CD8-positive, alpha-beta T cell (primary cell): ENCODE measurements at regions of chr6 and their contacts with region 1.

Region 1: DNA sequence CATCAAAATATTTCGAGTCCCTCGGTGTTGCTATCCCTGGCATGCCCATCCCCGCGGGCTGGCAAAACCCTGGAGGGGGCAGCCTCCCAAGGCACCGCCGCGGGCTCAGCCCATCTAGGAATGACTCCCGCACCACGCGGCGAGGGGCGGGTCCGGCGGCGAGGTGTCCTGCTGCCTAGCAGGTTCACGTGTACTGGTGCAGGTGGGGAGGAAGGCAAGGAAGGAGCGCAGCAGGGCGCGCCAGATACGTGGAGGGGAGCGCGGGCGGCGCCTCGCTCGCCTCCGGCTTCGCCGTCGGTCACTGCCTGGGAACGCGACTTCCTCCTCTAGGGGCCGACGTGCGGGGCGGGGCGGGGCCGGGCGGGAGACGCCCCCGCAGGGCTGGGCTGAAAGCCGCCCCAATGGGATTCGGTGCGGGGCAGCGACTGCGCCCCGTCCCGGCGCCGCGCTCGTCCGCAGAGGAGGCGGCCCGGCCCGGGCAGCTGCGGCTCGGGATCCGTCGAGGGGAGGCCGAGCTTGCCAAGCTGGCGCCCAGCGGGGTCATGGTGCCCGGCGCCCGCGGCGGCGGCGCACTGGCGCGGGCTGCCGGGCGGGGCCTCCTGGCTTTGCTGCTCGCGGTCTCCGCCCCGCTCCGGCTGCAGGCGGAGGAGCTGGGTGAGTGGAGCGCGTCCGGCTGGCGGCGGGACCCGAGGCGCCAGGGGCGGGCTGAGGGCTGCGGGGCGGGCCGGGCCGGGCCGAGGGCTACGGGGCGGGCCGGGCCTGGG is at the start of gene DCBLD1:
- DNase-seq: peak in 8 of 9 experiments; percentile 21 to 75 (median 47)
- ATAC-seq: peak; percentile 66
- H3K4me3 ChIP-seq: peak within 1 kb of the TSS; percentile 72 to 74
- H3K4me3 Mint-ChIP-seq: peak within 1 kb of the TSS; percentile 90
- H3K27ac ChIP-seq: no peak within 1 kb of the TSS
- H3K27ac Mint-ChIP-seq: peak within 1 kb of the TSS; percentile 47
- H3K4me1 ChIP-seq: peaks cover 16% of the 10 kb centered on the region
- H3K4me1 Mint-ChIP-seq: peaks cover 17% of the 10 kb centered on the region
- H3K27me3 ChIP-seq: no peaks in the 10 kb centered on the region
- H3K27me3 Mint-ChIP-seq: peaks cover 31% of the 10 kb centered on the region
- CTCF ChIP-seq: no peak
- total RNA-seq, gene DCBLD1: 2.0 to 2.1 TPM

Region 2: GRCh38 chr6:117233145-117233544 is 249.3 kb before region 1 on chr6:
- CTCF ChIA-PET with region 1: no interaction called
- POLR2A ChIA-PET with region 1: no interaction called
- intact Hi-C with region 1: no loop called
- DNase-seq: no peak
- ATAC-seq: no peak
- H3K4me3 ChIP-seq: no peak overlapping the region
- H3K4me3 Mint-ChIP-seq: no peak overlapping the region
- H3K27ac ChIP-seq: no peak overlapping the region
- H3K27ac Mint-ChIP-seq: no peak overlapping the region
- H3K4me1 ChIP-seq: no peaks in the 10 kb centered on the region
- H3K4me1 Mint-ChIP-seq: no peaks in the 10 kb centered on the region
- H3K27me3 ChIP-seq: no peaks in the 10 kb centered on the region
- H3K27me3 Mint-ChIP-seq: no peaks in the 10 kb centered on the region
- CTCF ChIP-seq: no peak

Region 3: GRCh38 chr6:117463762-117464665 is 18.4 kb before region 1 on chr6:
- CTCF ChIA-PET with region 1: interaction called, 3 read pairs
- POLR2A ChIA-PET with region 1: no interaction called
- intact Hi-C with region 1: loop called in 1 of 2 experiments (anchors 2 kb)
- DNase-seq: no peak
- ATAC-seq: peak; percentile 48
- H3K4me3 ChIP-seq: no peak overlapping the region
- H3K4me3 Mint-ChIP-seq: no peak overlapping the region
- H3K27ac ChIP-seq: no peak overlapping the region
- H3K27ac Mint-ChIP-seq: no peak overlapping the region
- H3K4me1 ChIP-seq: no peaks in the 10 kb centered on the region
- H3K4me1 Mint-ChIP-seq: peaks cover 2% of the 10 kb centered on the region
- H3K27me3 ChIP-seq: no peaks in the 10 kb centered on the region
- H3K27me3 Mint-ChIP-seq: peaks cover 2% of the 10 kb centered on the region
- CTCF ChIP-seq: no peak

Region 4: DNA sequence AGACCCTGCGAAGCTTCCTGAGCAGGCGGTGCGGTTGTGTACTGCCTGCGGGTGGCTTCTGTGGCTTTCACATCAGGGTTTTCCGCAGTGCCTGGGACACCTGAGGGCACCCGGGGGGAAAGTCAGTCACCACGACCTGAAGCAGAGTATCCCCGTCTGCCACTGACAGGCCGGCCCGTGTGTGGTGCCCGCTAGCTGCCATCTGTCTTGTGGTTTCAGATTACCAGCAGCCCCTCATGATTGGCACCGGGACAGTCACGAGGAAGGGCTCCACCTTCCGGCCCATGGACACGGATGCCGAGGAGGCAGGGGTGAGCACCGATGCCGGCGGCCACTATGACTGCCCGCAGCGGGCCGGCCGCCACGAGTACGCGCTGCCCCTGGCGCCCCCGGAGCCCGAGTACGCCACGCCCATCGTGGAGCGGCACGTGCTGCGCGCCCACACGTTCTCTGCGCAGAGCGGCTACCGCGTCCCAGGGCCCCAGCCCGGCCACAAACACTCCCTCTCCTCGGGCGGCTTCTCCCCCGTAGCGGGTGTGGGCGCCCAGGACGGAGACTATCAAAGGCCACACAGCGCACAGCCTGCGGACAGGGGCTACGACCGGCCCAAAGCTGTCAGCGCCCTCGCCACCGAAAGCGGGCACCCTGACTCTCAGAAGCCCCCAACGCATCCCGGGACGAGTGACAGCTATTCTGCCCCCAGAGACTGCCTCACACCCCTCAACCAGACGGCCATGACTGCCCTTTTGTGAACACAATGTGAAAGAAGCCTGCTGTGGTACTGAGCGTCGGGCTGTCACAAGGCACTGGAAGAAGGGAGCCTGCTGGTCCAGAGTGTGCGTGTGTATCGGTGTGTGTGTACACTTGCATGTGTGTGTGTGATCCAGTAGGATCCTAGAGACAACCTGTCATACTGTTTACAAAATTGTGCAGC is 65.5 kb after region 1 on chr6:
- CTCF ChIA-PET with region 1: interaction called, 10 read pairs
- POLR2A ChIA-PET with region 1: interaction called, 26 read pairs
- intact Hi-C with region 1: loop called in 1 of 2 experiments (anchors 1 kb)
- DNase-seq: peak; percentile 12 to 76 (median 50)
- ATAC-seq: peak; percentile 42
- H3K4me3 ChIP-seq: peak overlapping the region; percentile 55 to 69
- H3K4me3 Mint-ChIP-seq: peak overlapping the region; percentile 85
- H3K27ac ChIP-seq: peak overlapping the region; percentile 64 to 70
- H3K27ac Mint-ChIP-seq: peak overlapping the region; percentile 92
- H3K4me1 ChIP-seq: peaks cover 35% of the 10 kb centered on the region
- H3K4me1 Mint-ChIP-seq: peaks cover 43% of the 10 kb centered on the region
- H3K27me3 ChIP-seq: no peaks in the 10 kb centered on the region
- H3K27me3 Mint-ChIP-seq: no peaks in the 10 kb centered on the region
- CTCF ChIP-seq: no peak

Region 5: DNA sequence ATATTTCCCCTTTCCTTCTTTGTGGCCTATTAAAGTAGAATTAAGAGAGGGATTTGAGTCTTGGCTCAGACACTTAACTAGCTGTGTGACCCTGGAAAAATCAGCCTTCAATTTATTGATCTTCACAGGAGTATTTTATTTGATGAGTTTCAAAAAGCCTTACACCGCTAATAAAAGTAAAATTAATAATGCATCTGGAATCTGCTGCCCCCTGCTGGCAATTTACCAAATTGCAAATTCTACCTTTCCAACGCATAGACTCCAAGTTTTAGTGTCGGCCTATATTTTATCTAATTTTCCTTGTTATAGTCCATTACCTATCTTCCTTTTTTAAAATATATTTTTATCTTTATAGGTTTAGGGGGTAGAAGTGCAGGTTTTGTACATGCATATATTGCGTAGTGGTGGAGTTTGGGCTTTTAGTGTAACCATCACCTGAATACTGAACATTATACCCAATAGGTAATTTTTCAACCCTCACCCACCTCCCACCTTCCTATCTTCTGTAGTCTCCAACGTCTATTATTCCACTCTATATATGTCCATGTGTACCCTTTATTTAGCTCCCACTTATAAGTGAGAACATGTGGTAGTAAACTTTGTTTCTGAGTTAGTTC is 73.6 kb after region 1 on chr6:
- CTCF ChIA-PET with region 1: interaction called, 42 read pairs
- POLR2A ChIA-PET with region 1: interaction called, 26 read pairs
- intact Hi-C with region 1: loop called (anchors 1 to 2 kb)
- DNase-seq: peak in 8 of 9 experiments; percentile 26 to 78 (median 65)
- ATAC-seq: peak; percentile 55
- H3K4me3 ChIP-seq: no peak overlapping the region
- H3K4me3 Mint-ChIP-seq: no peak overlapping the region
- H3K27ac ChIP-seq: no peak overlapping the region
- H3K27ac Mint-ChIP-seq: no peak overlapping the region
- H3K4me1 ChIP-seq: peaks cover under 1% of the 10 kb centered on the region
- H3K4me1 Mint-ChIP-seq: peaks cover 8% of the 10 kb centered on the region
- H3K27me3 ChIP-seq: no peaks in the 10 kb centered on the region
- H3K27me3 Mint-ChIP-seq: no peaks in the 10 kb centered on the region
- CTCF ChIP-seq: peak; percentile 97